Right lobe of liver (tissue), 6 donors: ENCODE measurements at regions of chr15 and their contacts with region 1.

Region 1: DNA sequence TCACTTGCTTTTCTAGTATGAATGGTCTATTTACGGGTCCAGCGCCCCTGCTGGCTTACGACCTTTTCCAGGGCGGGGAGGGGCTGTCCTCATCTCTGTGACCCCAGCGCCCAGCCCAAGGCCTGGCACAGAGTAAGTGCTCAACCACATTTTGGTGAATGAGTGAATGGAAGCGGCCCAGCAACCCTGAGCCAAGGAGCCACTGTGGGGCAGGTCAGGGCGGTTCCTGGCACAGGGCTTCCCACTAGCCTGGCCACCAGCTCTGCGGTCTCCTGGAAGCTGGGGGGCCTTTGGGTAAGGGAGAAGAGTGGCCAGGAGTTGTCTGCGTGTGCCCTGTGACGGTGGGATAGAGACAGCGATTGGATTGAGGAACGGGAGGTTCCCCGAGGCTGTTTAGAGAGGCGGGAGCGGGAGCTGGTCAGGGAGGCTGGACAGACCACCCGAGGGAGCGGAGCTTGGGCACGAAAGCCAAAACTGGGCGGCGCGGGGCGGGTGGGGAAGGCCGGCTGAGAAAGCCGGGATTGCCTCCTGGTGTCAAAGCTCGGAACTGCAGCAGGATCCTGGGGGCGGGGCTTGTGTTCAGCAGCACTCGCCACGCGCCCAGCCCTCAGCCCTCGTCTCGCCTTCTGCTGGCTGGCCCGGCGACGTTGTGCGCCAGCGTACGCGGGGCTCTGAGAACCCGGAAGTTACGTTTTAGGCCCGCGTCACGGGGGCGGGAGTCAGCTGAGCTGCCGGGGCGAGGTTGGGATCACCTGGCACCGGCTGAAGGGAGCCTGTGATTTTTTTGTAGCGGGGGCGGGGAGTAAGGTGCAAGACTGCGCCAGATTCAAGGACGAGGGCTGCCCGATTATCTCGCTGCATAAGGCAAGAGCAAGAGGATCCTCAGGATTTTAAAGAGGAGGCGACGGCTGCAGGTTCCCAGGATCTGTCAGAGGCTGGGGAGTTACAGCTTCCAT is at the start of gene VPS18:
- DNase-seq: peak; percentile 99
- ATAC-seq: peak; percentile 92 to 97 (median 96)
- H3K4me3 ChIP-seq: peak within 1 kb of the TSS; percentile 72 to 95 (median 83)
- H3K27ac ChIP-seq: peak within 1 kb of the TSS; percentile 85 to 90 (median 88)
- H3K4me1 ChIP-seq: peaks cover 0 to 18% (median 6%) of the 10 kb centered on the region in 4 donors
- H3K27me3 ChIP-seq: no peaks in the 10 kb centered on the region
- CTCF ChIP-seq: peak; percentile 97 to 99 (median 98)
- POLR2A ChIP-seq: peak; percentile 82
- total RNA-seq, gene VPS18: 8.4 to 24.7 (median 12.9) TPM

Region 2: GRCh38 chr15:40857601-40858341 is 36.2 kb before region 1 on chr15:
- intact Hi-C with region 1: loop called in 1 of 2 experiments (anchors 5 kb)
- DNase-seq: peak; percentile 65 to 75 (median 73)
- ATAC-seq: peak; percentile 87 to 94 (median 91)
- H3K4me3 ChIP-seq: no peak overlapping the region
- H3K27ac ChIP-seq: no peak overlapping the region
- H3K4me1 ChIP-seq: no peaks in the 10 kb centered on the region
- H3K27me3 ChIP-seq: no peaks in the 10 kb centered on the region
- CTCF ChIP-seq: peak; percentile 89 to 92 (median 91)
- POLR2A ChIP-seq: no peak